ENCODE measurements at regions of chr17 and their contacts with region 1.

Region 1: DNA sequence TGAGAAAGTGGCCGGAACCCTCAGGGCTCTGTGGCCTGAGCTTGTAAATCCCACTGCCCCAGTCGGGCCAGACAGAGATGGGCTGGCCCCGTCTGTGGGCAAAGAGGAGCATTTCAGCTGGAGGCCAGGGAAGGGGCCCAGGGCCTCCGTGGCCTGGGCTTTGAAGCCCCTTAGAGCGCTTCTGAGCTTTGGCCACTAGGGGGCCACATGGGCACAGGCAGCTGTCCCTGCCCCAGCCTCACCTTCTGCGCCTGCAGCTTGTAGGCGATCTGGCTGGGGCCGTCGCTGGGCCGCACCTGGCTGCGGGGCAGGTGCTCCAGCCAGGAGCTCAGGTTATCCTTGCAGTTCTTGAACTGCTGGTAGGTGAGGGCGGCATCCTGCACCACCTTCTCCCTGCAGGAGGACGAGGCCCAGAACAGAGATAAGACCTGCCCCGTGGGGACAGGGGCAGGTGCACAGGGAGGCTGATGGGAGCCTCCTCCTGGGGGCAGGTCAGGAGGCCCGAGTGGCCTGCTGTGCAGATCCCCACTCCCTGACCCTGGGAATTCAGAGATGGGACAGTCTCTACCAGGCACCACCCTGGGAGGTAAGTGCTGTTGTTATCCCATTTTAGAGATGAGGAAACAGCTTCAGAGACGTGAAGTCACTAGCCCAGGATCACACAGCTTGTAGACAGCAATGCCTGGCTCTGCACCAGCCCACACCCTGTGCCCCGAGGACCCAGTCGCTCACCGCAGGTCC is 12.8 kb downstream of the EVPL start:
- DNase-seq: peak; percentile 70
- ATAC-seq: peak; percentile 85 to 88

Region 2: GRCh38 chr17:76296186-76296585 is 281.8 kb after region 1 on chr17:
- intact Hi-C with region 1: loop called in 1 of 2 experiments (anchors 10 kb)
- DNase-seq: no peak
- ATAC-seq: peak; percentile 52 to 66

Measured in left cardiac atrium (tissue), 4 donors.